ENCODE measurements at regions of chr20 and their contacts with region 1.

Region 1: DNA sequence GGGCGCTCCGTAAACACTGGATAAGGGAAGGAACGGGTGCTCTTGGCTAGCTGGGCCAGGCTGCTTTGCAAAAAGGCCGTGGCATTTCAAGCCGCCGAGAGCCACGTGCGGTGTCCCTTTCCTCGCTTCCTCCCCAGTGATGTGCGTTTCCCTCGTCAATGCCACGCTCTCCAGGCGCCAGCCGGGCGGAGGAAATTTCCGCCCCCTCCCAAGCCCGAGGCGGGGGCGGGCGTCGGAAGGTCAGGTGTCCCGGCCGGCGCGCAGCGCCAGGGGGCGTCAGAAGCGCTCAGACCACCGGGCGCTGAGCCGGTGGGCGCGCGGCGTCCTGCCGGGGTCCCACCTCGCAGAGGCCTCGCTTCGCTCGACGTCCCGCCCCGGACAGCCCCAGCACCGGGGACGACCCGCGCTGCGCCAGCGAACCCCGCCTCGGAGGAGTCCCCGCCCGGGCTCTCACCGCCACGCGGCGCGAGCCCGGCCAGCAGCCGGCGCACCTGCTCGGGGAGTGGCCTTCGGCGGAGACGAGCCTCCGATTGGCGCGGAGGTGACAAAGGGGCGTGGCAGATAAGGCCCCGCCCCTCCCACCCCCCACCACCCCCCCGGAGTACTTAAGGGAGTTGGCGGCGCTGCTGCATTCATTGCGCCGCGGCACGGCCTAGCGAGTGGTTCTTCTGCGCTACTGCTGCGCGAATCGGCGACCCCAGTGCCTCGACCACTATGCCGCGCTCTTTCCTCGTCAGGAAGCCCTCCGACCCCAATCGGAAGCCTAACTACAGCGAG is at the start of gene SNAI1:
- DNase-seq: peak; percentile 96
- H3K4me3 ChIP-seq: peak within 1 kb of the TSS; percentile 64
- H3K27ac ChIP-seq: peak within 1 kb of the TSS; percentile 40
- H3K4me1 ChIP-seq: peaks cover 44% of the 10 kb centered on the region
- CTCF ChIP-seq: peak; percentile 81
- total RNA-seq, gene SNAI1: 1.0 and 3.6 TPM in 2 replicates

Region 2: DNA sequence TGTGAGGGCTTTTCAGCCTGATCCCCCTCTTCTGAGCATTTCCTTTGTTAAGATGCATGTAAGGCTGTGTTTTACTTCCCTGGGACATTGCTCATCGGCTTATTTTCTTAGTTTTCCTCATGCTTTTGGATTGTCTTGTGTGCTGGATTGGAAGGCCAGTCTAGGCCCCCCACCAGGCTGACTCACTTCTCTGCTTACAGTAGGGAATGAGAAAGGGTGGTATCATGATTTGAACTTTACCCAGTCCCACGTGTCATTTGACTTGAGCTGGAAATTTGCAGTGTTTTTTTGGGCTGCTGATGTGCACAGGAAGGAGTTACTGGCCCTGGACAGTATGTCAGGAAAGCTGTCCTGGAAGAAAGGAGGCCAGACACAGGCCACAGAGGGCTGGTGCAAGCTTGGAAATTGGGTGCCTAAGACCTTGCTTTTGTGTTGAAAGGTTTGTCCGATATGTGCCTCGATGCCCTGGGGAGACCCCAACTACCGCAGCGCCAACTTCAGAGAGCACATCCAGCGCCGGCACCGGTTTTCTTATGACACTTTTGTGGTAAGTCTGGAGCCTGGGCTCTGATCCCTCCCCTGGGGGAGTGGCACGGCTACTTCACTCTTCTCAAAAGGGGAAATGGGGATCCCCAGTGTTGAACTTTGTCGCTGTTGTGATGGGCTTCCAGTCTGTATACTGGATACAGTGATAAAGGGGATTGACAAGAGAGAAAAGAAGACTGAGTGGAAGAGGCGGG is 33.6 kb before region 1 on chr20:
- CTCF ChIA-PET with region 1: no interaction called
- POLR2A ChIA-PET with region 1: no interaction called
- intact Hi-C with region 1: no loop called
- DNase-seq: no peak
- H3K4me3 ChIP-seq: no peak overlapping the region
- H3K27ac ChIP-seq: no peak overlapping the region
- H3K4me1 ChIP-seq: no peaks in the 10 kb centered on the region
- CTCF ChIP-seq: no peak

Region 3: DNA sequence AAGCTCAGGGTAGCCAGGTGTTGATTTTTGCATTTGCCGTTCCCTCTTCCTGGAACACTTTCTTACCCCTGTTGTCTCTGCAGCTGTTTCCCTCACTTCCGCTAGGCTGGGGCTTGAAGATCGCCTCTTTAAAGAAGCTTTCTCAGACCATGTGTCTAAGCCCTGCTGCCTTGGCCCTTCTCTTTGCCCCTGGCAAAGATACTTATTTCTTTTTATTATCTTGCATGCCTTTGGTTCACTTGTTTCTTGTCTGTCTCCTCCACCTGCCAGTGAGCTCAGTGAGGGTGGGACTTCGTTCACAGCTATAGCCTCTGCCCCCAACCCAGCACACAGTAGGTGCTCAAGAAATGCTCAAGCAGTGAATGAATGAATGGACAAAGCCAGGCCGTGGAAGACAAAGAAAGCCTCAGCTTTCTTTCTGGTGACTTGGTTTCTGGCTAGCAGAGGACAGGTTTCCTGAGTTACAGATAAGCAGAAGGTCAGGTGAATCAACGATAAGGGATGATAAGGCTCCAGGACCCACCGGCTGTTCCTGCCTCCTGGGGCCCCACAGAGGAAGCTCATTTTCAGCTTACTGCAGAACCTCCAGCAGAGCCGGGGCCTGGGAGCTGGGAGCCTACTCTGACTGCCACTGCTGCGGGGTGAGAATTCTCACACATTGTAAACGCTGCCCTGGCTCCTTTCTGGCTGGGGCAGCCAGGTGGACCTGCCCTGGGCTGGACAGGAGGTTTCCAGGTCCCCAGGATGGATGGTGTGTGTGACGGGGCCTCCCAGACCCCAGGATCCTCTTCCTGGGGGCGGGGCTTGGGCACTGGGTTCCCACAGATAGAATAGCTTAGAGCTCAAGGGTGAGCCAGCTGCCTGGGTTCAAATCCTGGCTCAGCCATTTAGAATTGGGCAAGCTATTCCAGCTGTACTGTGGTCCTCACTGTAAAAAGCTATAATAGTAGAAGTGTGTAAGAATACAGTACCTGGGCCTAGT is 30.0 kb after region 1 on chr20:
- CTCF ChIA-PET with region 1: interaction called, 4 read pairs
- POLR2A ChIA-PET with region 1: interaction called, 3 read pairs
- intact Hi-C with region 1: loop called (anchors 2 kb)
- DNase-seq: peak; percentile 94
- H3K4me3 ChIP-seq: peak overlapping the region; percentile 35
- H3K27ac ChIP-seq: peak overlapping the region; percentile 96
- H3K4me1 ChIP-seq: peaks cover 33% of the 10 kb centered on the region
- CTCF ChIP-seq: no peak

Region 4: DNA sequence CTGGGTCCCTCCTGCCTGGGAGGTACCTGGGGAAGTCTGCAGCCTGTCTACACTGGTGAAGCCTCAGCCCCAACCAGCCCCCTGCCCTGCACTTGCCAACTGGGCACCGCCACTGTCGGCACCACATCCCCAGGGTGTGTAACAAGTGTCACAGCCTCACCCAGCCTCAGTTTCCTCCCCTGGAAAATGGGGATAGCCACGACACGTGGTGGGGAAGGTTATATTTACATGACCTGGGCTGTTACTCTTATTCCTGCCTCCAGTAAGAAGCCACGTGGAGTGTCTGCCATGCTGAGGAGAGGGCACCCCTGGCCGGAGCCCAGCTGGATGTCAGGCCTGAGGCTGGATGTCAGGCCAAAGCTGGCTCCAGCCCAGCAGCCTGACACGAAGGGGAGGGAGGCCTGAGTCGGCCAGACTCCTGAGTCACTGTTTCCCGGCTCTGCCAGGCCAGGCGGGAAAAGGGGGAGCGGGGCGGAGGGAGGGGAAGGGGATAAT is 45.1 kb after region 1 on chr20:
- CTCF ChIA-PET with region 1: no interaction called
- POLR2A ChIA-PET with region 1: no interaction called
- intact Hi-C with region 1: loop called (anchors 1 kb)
- DNase-seq: no peak
- H3K4me3 ChIP-seq: no peak overlapping the region
- H3K27ac ChIP-seq: no peak overlapping the region
- H3K4me1 ChIP-seq: peaks cover 12% of the 10 kb centered on the region
- CTCF ChIP-seq: no peak

Region 5: DNA sequence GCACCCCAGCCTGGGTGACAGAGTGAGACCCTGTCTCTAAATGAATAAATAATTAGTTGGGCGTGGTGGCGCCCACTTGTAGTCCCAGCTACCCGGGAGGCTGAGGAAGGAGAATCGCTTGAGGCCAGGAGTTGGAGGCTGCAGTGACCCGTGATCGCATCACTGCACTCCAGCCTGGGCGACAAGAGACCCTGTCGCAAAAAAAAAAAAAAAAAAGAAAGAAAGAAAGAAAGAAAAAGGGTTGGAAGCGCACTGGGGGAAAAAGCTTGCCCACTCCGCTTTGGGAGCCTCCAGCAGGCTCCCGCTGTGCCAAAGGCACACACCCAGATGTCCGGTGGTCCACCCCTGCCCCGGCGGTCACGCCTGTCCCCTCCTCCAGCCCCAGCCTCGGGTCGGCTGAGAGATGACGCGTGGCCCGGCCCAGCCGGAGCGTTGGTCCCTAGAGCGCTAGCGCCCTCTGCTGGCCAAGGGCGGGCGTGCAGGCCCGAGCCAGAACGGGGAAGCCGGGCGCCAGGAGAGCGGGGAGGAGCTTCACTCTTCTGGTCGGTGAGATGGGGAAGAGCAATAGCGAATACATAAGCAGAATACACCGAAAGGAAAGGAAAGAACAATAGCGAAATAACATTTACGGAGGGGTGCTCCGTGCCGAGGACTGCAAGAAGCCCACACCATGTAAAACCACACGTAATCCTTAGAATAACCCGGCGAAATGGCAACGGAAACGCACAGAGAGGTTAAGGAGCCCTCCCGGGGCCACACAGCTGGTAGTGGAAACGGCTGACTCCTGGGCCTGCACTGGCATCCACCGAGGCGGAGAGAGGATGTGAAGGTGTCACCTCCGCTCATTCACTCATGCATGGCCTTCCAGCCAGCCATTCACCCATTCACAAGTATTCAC is 88.7 kb after region 1 on chr20:
- CTCF ChIA-PET with region 1: interaction called, 23 read pairs
- POLR2A ChIA-PET with region 1: interaction called, 6 read pairs
- intact Hi-C with region 1: loop called (anchors 1 kb)
- DNase-seq: peak; percentile 87
- H3K4me3 ChIP-seq: peak overlapping the region; percentile 56
- H3K27ac ChIP-seq: no peak overlapping the region
- H3K4me1 ChIP-seq: peaks cover 7% of the 10 kb centered on the region
- CTCF ChIP-seq: peak; percentile 99

Region 6: GRCh38 chr20:50085452-50086365 is 103.2 kb after region 1 on chr20:
- CTCF ChIA-PET with region 1: no interaction called
- POLR2A ChIA-PET with region 1: no interaction called
- intact Hi-C with region 1: loop called (anchors 1 kb)
- DNase-seq: peak; percentile 76
- H3K4me3 ChIP-seq: peak overlapping the region; percentile 53
- H3K27ac ChIP-seq: peak overlapping the region; percentile 34
- H3K4me1 ChIP-seq: peaks cover 16% of the 10 kb centered on the region
- CTCF ChIP-seq: peak; percentile 97

Region 7: GRCh38 chr20:50165684-50166554 is 183.4 kb after region 1 on chr20:
- CTCF ChIA-PET with region 1: interaction called, 7 read pairs
- POLR2A ChIA-PET with region 1: no interaction called
- intact Hi-C with region 1: loop called (anchors 1 kb)
- DNase-seq: no peak
- H3K4me3 ChIP-seq: no peak overlapping the region
- H3K27ac ChIP-seq: no peak overlapping the region
- H3K4me1 ChIP-seq: no peaks in the 10 kb centered on the region
- CTCF ChIP-seq: no peak

Region 8: GRCh38 chr20:50179507-50180016 is 197.0 kb after region 1 on chr20:
- CTCF ChIA-PET with region 1: no interaction called
- POLR2A ChIA-PET with region 1: interaction called, 3 read pairs
- intact Hi-C with region 1: loop called (anchors 1 kb)
- DNase-seq: no peak
- H3K4me3 ChIP-seq: no peak overlapping the region
- H3K27ac ChIP-seq: no peak overlapping the region
- H3K4me1 ChIP-seq: no peaks in the 10 kb centered on the region
- CTCF ChIP-seq: no peak

Measured in OCI-LY7 (cell line).